ENCODE measurements at regions of chr5 and their contacts with region 1.

Region 1: DNA sequence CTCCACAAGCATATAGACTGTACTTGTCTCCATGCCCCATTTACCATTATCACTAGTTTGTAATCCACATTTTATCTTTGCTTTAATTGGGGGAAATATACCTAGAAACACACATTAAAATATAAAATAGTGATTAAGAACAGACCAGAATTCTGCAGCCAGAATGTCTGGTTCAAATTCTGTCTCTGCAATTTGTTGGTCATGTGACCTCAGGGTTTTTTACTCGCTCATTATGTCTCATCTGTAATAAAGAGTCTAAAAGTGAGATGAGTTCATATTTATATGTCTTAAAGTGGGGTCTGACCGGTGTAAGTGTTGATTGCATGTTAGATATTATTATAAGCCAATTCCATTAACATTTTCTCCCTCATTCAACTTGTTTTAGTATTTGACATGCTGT is 322.3 kb upstream of the CDH18 start:
- DNase-seq: no peak
- H3K4me3 ChIP-seq: no peak overlapping the region
- H3K27ac ChIP-seq: no peak overlapping the region
- H3K27me3 ChIP-seq: no peaks in the 10 kb centered on the region
- CTCF ChIP-seq: no peak

Region 2: DNA sequence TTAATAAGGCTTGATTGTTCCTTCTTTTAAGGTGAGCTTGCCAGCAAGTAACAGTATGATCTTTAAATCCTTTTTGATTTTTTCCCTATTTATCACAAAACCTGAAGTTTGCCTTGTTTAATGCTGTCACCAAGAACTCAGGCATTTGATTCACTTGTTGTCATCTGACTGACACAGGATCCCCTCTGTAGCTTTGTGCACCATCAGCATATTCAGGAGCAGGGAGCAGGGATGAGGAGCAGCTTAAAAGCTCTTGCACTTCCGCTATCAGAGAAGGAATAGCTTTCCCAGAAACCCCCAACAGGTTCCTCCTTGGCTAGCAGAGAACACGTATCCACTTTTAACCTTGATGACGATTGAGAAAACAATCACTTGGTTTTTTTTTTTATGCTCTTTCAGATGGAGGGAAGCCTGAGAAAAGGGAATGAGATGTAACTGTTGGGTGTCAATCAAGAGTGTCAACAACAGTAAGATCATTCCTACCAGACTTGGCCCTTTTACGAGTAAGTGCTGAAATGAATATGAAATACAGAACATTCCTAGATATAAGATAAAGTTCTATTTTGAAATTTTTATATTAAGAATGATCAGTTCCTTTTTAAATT is 110.8 kb after region 1 on chr5:
- CTCF ChIA-PET with region 1: interaction called, 12 read pairs
- POLR2A ChIA-PET with region 1: no interaction called
- DNase-seq: no peak
- H3K4me3 ChIP-seq: no peak overlapping the region
- H3K27ac ChIP-seq: no peak overlapping the region
- H3K27me3 ChIP-seq: no peaks in the 10 kb centered on the region
- CTCF ChIP-seq: no peak

Region 3: DNA sequence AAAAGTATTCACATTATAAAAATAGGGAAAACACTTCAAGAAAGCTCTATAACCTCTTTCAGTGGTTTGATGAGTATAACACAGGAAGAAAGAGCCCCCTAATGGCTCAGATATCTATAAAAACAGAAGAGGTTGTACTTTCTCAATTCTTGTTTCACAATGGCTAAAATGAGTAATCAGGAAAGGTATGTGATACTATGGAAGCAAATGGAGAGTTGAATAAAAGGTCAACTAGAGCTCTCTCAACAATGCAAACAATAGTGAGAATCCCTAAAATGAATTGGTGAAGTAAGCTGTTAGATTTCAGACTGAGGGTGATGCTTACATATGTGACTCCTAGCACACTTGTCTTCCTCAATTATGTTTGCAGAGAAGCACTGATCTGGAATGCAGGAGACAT is 262.3 kb after region 1 on chr5:
- CTCF ChIA-PET with region 1: no interaction called
- POLR2A ChIA-PET with region 1: no interaction called
- DNase-seq: no peak
- H3K4me3 ChIP-seq: no peak overlapping the region
- H3K27ac ChIP-seq: no peak overlapping the region
- H3K27me3 ChIP-seq: no peaks in the 10 kb centered on the region
- CTCF ChIP-seq: 0 out of 2 replicates have a peak, but pooled peaks have one; percentile 8